K562 (cell line): ENCODE measurements at regions of chr4 and their contacts with region 1.

Region 1: GRCh38 chr4:174120446-174121295 is 162.8 kb downstream of the FBXO8 start:
- DNase-seq: peak; percentile 47 to 78 (median 54)
- ATAC-seq: peak; percentile 90
- H3K4me3 ChIP-seq: peak overlapping the region; percentile 34
- H3K27ac ChIP-seq: no peak overlapping the region
- H3K4me1 ChIP-seq: peaks cover 0 to 3% of the 10 kb centered on the region in 2 experiments; a peak in 1 of 5 replicates
- H3K27me3 ChIP-seq: no peaks in the 10 kb centered on the region
- CTCF ChIP-seq: peak; percentile 64 to 75 (median 66)
- EP300 ChIP-seq: no peak
- POLR2A ChIP-seq: no peak
- RAD21 ChIP-seq: peak; percentile 49 to 61

Region 2: GRCh38 chr4:174005422-174005821 is 115.2 kb before region 1 on chr4:
- CTCF ChIA-PET with region 1: no interaction called
- POLR2A ChIA-PET with region 1: no interaction called
- in situ Hi-C with region 1: no loop called
- intact Hi-C with region 1: loop called (anchors 2 kb)
- DNase-seq: peak in 1 of 4 experiments; percentile 3
- ATAC-seq: no peak
- H3K4me3 ChIP-seq: no peak overlapping the region
- H3K27ac ChIP-seq: no peak overlapping the region
- H3K4me1 ChIP-seq: no peaks in the 10 kb centered on the region; a peak in 1 of 5 replicates
- H3K27me3 ChIP-seq: no peaks in the 10 kb centered on the region
- CTCF ChIP-seq: no peak
- EP300 ChIP-seq: no peak
- POLR2A ChIP-seq: no peak
- RAD21 ChIP-seq: no peak

Region 3: GRCh38 chr4:174734181-174734580 is 613.5 kb after region 1 on chr4:
- CTCF ChIA-PET with region 1: no interaction called
- POLR2A ChIA-PET with region 1: no interaction called
- in situ Hi-C with region 1: no loop called
- intact Hi-C with region 1: no loop called
- DNase-seq: no peak
- ATAC-seq: no peak
- H3K4me3 ChIP-seq: no peak overlapping the region
- H3K27ac ChIP-seq: no peak overlapping the region
- H3K4me1 ChIP-seq: no peaks in the 10 kb centered on the region
- H3K27me3 ChIP-seq: no peaks in the 10 kb centered on the region
- CTCF ChIP-seq: no peak
- EP300 ChIP-seq: no peak
- POLR2A ChIP-seq: no peak
- RAD21 ChIP-seq: no peak